Heart right ventricle (tissue), 16 donors: ENCODE measurements at regions of chr12 and their contacts with region 1.

Region 1: DNA sequence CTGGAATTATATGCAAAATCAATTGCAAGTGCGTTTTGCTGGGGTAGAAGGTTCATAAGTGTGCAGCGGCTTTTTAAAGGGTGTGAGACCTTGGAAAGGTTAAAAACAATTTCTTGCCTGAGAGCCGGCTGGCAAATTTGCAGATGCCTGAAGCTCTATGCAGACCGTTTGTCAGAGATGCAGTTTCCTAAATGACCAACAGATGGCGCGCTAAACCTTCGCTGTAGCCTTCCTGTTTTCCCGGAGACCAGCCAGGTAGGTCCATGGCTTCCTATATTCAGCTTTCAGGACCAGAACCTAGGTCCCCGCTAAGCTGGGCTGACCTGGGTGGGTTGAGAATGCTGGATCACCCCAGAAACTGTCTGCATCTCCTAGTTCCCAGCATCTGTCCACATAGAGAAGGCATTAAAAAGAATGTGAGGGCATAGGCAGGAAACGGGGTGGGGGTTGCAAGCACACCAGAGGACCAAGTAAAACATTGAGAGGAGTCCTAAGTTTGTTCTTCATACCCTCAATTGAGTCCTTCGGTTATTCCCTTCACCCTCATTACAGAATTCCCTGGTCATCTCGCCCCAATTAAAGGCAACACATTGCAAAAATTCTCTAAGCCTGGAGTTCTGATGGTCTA is 5.7 kb upstream of the NOS1 start:
- DNase-seq: peak in 1 of 2 donors; percentile 66
- ATAC-seq: peak in 6 of 8 donors; percentile 36 to 73 (median 55)
- H3K4me3 ChIP-seq: no peak overlapping the region
- H3K27ac ChIP-seq: no peak overlapping the region
- H3K4me1 ChIP-seq: no peaks in the 10 kb centered on the region
- H3K27me3 ChIP-seq: peaks cover 0 to 58% (median 42%) of the 10 kb centered on the region in 7 donors
- CTCF ChIP-seq: peak; percentile 77 to 93 (median 87)

Region 2: GRCh38 chr12:117587631-117588287 is 220.6 kb after region 1 on chr12:
- intact Hi-C with region 1: loop called (anchors 1 to 5 kb)
- DNase-seq: peak; percentile 18 to 36
- ATAC-seq: peak in 5 of 8 donors; percentile 38 to 73 (median 67)
- H3K4me3 ChIP-seq: no peak overlapping the region
- H3K27ac ChIP-seq: no peak overlapping the region
- H3K4me1 ChIP-seq: no peaks in the 10 kb centered on the region
- H3K27me3 ChIP-seq: peaks cover 0 to 54% (median 37%) of the 10 kb centered on the region in 7 donors
- CTCF ChIP-seq: peak; percentile 62 to 88 (median 81)

Region 3: DNA sequence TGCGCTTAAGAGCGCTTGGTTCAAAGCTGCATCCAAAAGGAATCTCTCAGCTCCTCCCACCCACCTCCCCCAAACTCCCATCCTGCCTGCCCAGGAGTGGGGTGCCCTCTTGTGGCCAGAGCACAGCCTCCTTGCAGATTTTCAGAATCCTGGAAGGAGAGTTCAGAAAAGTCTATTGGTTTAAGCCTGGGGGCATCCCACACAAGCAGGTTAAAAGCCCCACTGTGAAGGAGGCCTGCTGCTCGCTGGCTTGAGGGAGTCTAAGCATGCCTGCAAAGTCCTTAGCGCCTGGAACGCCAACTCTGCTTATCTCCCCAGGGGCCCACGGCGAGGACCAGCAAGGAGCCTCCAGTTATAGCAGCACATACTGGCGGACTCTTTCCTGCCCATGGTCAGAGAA is 304.6 kb after region 1 on chr12:
- intact Hi-C with region 1: loop called in 1 of 10 experiments (anchors 10 kb)
- DNase-seq: no peak
- ATAC-seq: no peak
- H3K4me3 ChIP-seq: no peak overlapping the region
- H3K27ac ChIP-seq: no peak overlapping the region
- H3K4me1 ChIP-seq: no peaks in the 10 kb centered on the region
- H3K27me3 ChIP-seq: peaks cover 0 to 32% (median 17%) of the 10 kb centered on the region in 7 donors
- CTCF ChIP-seq: peak in 7 of 9 donors; percentile 29 to 51 (median 41)